ENCODE measurements at regions of chr13 and their contacts with region 1.

Region 1: DNA sequence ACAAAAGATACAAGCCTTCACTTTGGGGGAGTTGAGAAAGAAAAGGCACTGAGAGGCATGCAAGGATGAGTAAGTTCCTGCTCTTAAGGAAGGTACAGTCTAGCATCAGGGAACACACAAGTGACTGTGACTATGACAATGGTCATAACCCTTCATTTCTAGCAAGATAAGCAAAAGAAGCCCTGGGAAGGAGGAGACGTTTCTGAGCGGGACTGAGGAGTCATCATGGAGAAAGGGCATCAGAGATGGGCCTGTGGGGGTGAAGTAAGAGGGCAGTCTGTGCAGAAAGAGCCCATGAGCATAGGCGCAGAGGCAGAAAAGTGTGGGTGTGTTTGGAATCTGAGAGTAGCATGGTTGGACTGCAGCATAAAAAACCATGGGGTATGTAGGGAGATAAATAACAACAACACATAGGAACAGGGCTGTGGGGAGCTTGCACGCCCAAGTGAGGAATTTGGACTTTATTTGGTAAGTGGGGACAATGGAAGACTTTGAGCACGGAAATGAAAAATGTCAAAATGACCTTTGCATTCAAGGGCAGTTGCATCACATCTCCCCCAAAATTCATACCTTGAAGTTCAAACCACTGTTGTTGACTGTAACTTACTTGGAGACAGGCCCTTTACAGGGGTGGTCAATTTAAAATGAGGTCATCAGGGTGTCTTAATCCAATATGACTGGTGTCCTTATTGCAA is 86.7 kb downstream of the MBNL2 start:
- DNase-seq: no peak
- H3K4me3 ChIP-seq: no peak overlapping the region
- H3K27me3 ChIP-seq: no peaks in the 10 kb centered on the region
- CTCF ChIP-seq: no peak

Region 2: GRCh38 chr13:97359181-97360057 is 50.5 kb after region 1 on chr13:
- CTCF ChIA-PET with region 1: interaction called, 4 read pairs
- POLR2A ChIA-PET with region 1: interaction called, 11 read pairs
- DNase-seq: peak; percentile 25
- H3K4me3 ChIP-seq: no peak overlapping the region
- H3K27me3 ChIP-seq: no peaks in the 10 kb centered on the region
- CTCF ChIP-seq: peak; percentile 81

Measured in BJ (cell line).